SK-N-SH (cell line): ENCODE measurements at regions of chr17 and their contacts with region 1.

Region 1: GRCh38 chr17:74203439-74204240 is at the start of gene RPL38:
- DNase-seq: peak; percentile 98
- H3K4me3 ChIP-seq: peak within 1 kb of the TSS; percentile 72 to 99
- H3K27ac ChIP-seq: peak within 1 kb of the TSS; percentile 63 to 81
- H3K4me1 ChIP-seq: peaks cover 22 to 36% of the 10 kb centered on the region in 2 experiments
- H3K27me3 ChIP-seq: no peaks in the 10 kb centered on the region
- CTCF ChIP-seq: peak; percentile 99
- EP300 ChIP-seq: peak in 1 of 2 experiments; percentile 75; a peak in 3 of 4 replicates
- RAD21 ChIP-seq: peak; percentile 57
- polyA plus RNA-seq, gene RPL38: 816 and 4,154 TPM in 2 replicates

Region 2: GRCh38 chr17:73757420-73757819 is 446.2 kb before region 1 on chr17:
- CTCF ChIA-PET with region 1: interaction called, 11 read pairs
- POLR2A ChIA-PET with region 1: no interaction called
- DNase-seq: no peak
- H3K4me3 ChIP-seq: no peak overlapping the region
- H3K27ac ChIP-seq: no peak overlapping the region
- H3K4me1 ChIP-seq: peaks cover 0 to 22% of the 10 kb centered on the region in 2 experiments; a peak in 1 of 4 replicates
- H3K27me3 ChIP-seq: no peaks in the 10 kb centered on the region
- CTCF ChIP-seq: no peak
- EP300 ChIP-seq: no peak
- RAD21 ChIP-seq: no peak

Region 3: DNA sequence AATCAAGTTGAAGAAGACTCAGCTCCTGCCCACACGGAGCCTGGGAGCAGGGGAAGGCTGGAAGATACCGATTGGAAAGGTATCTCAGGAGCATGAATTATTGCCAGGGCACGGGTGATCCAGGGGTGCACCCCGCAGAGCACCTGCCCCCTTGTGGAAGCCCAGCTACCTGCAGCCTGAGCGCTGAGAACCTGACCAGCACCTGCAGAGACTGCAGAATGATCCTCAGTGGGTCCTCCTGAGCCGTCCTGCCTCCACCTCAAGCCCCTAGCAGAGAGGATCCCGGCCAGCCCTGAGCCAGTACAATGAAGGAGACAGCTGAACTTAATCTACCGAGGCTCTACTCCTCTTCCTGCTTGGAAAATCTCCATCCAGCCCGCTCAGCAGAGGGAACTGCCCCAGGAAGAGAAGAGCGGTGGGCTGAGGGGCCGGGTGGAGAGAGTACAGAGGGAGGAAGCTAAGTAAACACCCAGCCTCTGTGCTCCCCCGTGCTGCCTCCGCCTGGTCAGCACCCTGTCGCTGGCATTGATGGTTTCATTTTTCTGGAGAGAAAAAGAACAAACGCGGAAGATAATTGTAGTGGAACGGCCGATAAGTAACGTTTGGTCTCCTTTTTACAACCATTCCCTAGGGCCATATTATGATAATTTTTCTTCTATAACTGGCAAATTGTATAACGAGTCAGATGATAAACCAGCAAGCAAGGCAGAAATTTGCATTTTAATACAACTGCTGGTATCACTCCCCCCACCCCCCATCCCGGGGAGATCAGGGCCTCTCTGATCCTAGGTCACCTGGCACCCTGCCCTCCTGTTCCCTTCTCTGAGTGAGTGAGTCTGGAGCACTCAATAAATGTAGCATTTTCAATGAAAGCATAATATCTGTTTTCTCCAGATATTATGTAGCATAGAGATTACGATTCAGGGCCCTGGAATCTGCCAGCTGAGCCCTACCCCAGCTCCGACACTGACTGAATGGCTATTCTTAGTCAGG is 204.7 kb before region 1 on chr17:
- CTCF ChIA-PET with region 1: interaction called, 10 read pairs
- POLR2A ChIA-PET with region 1: no interaction called
- DNase-seq: peak; percentile 82
- H3K4me3 ChIP-seq: peak overlapping the region in 1 of 2 experiments; percentile 23; a peak in 1 of 4 replicates
- H3K27ac ChIP-seq: no peak overlapping the region
- H3K4me1 ChIP-seq: no peaks in the 10 kb centered on the region; a peak in 1 of 4 replicates
- H3K27me3 ChIP-seq: no peaks in the 10 kb centered on the region
- CTCF ChIP-seq: peak; percentile 25; the same call in 1 of the 2 replicates
- EP300 ChIP-seq: no peak
- RAD21 ChIP-seq: peak; percentile 73

Region 4: GRCh38 chr17:74104921-74105320 is 98.7 kb before region 1 on chr17:
- CTCF ChIA-PET with region 1: interaction called, 10 read pairs
- POLR2A ChIA-PET with region 1: no interaction called
- DNase-seq: no peak
- H3K4me3 ChIP-seq: no peak overlapping the region
- H3K27ac ChIP-seq: no peak overlapping the region
- H3K4me1 ChIP-seq: peaks cover 0 to 17% of the 10 kb centered on the region in 2 experiments; a peak in 1 of 4 replicates
- H3K27me3 ChIP-seq: no peaks in the 10 kb centered on the region
- CTCF ChIP-seq: no peak
- EP300 ChIP-seq: no peak
- RAD21 ChIP-seq: no peak

Region 5: GRCh38 chr17:74118504-74118903 is 85.1 kb before region 1 on chr17:
- CTCF ChIA-PET with region 1: interaction called, 13 read pairs
- POLR2A ChIA-PET with region 1: no interaction called
- DNase-seq: peak; percentile 71
- H3K4me3 ChIP-seq: no peak overlapping the region
- H3K27ac ChIP-seq: no peak overlapping the region
- H3K4me1 ChIP-seq: peaks cover 0 to 17% of the 10 kb centered on the region in 2 experiments; a peak in 1 of 4 replicates
- H3K27me3 ChIP-seq: no peaks in the 10 kb centered on the region
- CTCF ChIP-seq: no peak
- EP300 ChIP-seq: no peak
- RAD21 ChIP-seq: 0 out of 2 replicates have a peak, but pooled peaks have one; percentile 18

Region 6: GRCh38 chr17:74152591-74153455 is 50.8 kb before region 1 on chr17:
- CTCF ChIA-PET with region 1: interaction called, 20 read pairs
- POLR2A ChIA-PET with region 1: interaction called, 4 read pairs
- DNase-seq: peak; percentile 91
- H3K4me3 ChIP-seq: no peak overlapping the region
- H3K27ac ChIP-seq: peak overlapping the region in 1 of 2 experiments; percentile 96; a peak in 2 of 4 replicates
- H3K4me1 ChIP-seq: peaks cover 0 to 37% of the 10 kb centered on the region in 2 experiments; a peak in 2 of 4 replicates
- H3K27me3 ChIP-seq: no peaks in the 10 kb centered on the region
- CTCF ChIP-seq: no peak
- EP300 ChIP-seq: peak in 1 of 2 experiments; percentile 90; a peak in 2 of 4 replicates
- RAD21 ChIP-seq: peak; percentile 38

Region 7: GRCh38 chr17:74245145-74245831 is 41.6 kb after region 1 on chr17:
- CTCF ChIA-PET with region 1: interaction called, 11 read pairs
- POLR2A ChIA-PET with region 1: interaction called, 5 read pairs
- DNase-seq: peak; percentile 56
- H3K4me3 ChIP-seq: no peak overlapping the region
- H3K27ac ChIP-seq: no peak overlapping the region; a peak in 1 of 4 replicates
- H3K4me1 ChIP-seq: peaks cover 0 to 36% of the 10 kb centered on the region in 2 experiments; a peak in 1 of 4 replicates
- H3K27me3 ChIP-seq: no peaks in the 10 kb centered on the region
- CTCF ChIP-seq: no peak
- EP300 ChIP-seq: no peak
- RAD21 ChIP-seq: no peak